ENCODE measurements at regions of chr6 and their contacts with region 1.

Region 1: DNA sequence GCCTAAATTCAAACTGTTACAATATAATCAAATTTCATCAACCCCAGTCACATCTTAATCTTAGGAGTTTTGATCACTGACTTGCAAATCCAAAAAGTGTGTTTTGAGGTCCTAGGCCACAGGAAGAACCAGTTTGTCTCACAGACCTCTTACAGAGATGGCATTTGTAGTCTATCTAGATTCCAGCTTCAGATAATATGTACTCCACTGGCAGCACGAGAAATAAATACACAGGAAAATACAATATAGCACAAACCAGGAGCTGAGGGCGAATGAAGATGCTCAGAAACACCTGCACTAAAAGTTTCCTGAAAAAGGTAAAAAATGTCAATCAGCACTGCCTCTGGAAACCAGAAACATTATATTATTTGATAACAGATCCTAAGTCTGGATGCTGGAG is 647 bp upstream of the BTN3A3 start:
- DNase-seq: no peak
- H3K4me3 ChIP-seq: peak overlapping the region; percentile 38 to 54 (median 52)
- H3K27ac ChIP-seq: peak overlapping the region; percentile 82 to 86 (median 84)
- H3K4me1 ChIP-seq: peaks cover 0 to 21% (median 7%) of the 10 kb centered on the region in 4 donors
- H3K27me3 ChIP-seq: no peaks in the 10 kb centered on the region
- CTCF ChIP-seq: no peak
- EP300 ChIP-seq: no peak
- POLR2A ChIP-seq: no peak

Region 2: DNA sequence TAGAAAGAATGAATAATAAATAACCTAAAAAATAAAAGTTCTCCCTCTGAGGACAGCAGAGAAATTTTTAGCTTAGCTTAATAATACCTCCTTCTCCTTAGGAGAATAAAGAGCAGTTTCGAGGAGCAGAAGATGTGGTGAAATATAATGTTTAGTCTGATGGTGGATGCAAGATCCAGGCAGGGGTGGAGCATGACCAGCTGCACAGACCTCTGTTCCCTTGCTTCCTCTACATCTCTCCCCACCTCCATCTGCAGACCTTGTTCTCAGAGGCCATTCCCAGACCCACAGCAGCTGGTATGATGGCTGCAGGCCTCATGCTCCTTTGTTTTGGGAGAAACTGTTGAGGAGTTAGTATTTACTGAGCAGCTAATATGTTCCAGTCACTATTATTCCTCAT is 73.2 kb before region 1 on chr6:
- intact Hi-C with region 1: loop called (anchors 5 kb)
- DNase-seq: no peak
- H3K4me3 ChIP-seq: no peak overlapping the region
- H3K27ac ChIP-seq: no peak overlapping the region
- H3K4me1 ChIP-seq: peaks cover 0 to 23% (median 4%) of the 10 kb centered on the region in 4 donors
- H3K27me3 ChIP-seq: no peaks in the 10 kb centered on the region
- CTCF ChIP-seq: no peak
- EP300 ChIP-seq: no peak
- POLR2A ChIP-seq: no peak

Region 3: GRCh38 chr6:26421259-26422144 is 18.2 kb before region 1 on chr6:
- intact Hi-C with region 1: loop called (anchors 2 kb)
- DNase-seq: peak; percentile 90
- H3K4me3 ChIP-seq: peak overlapping the region; percentile 59 to 81 (median 78)
- H3K27ac ChIP-seq: peak overlapping the region; percentile 88 to 93 (median 90)
- H3K4me1 ChIP-seq: peaks cover 0 to 40% (median 27%) of the 10 kb centered on the region in 4 donors
- H3K27me3 ChIP-seq: no peaks in the 10 kb centered on the region
- CTCF ChIP-seq: no peak
- EP300 ChIP-seq: no peak
- POLR2A ChIP-seq: peak in 1 of 2 donors; percentile 22

Measured in sigmoid colon (tissue), 7 donors.